AG04450 (cell line): ENCODE measurements at regions of chr20 and their contacts with region 1.

Region 1: GRCh38 chr20:11676630-11677284 is 240.9 kb upstream of the BTBD3 start:
- DNase-seq: peak; percentile 15
- H3K4me3 ChIP-seq: no peak overlapping the region
- H3K27ac ChIP-seq: no peak overlapping the region
- H3K27me3 ChIP-seq: peaks cover 3% of the 10 kb centered on the region
- CTCF ChIP-seq: peak; percentile 91

Region 2: GRCh38 chr20:11549172-11550103 is 127.3 kb before region 1 on chr20:
- CTCF ChIA-PET with region 1: no interaction called
- POLR2A ChIA-PET with region 1: no interaction called
- DNase-seq: no peak
- H3K4me3 ChIP-seq: no peak overlapping the region
- H3K27ac ChIP-seq: no peak overlapping the region
- H3K27me3 ChIP-seq: no peaks in the 10 kb centered on the region
- CTCF ChIP-seq: no peak

Region 3: GRCh38 chr20:12166053-12166717 is 489.4 kb after region 1 on chr20:
- CTCF ChIA-PET with region 1: interaction called, 11 read pairs
- POLR2A ChIA-PET with region 1: no interaction called
- DNase-seq: peak; percentile 78
- H3K4me3 ChIP-seq: no peak overlapping the region
- H3K27ac ChIP-seq: peak overlapping the region; percentile 71
- H3K27me3 ChIP-seq: no peaks in the 10 kb centered on the region
- CTCF ChIP-seq: no peak

Region 4: GRCh38 chr20:12207875-12208274 is 531.1 kb after region 1 on chr20:
- CTCF ChIA-PET with region 1: interaction called, 12 read pairs
- POLR2A ChIA-PET with region 1: no interaction called
- DNase-seq: peak; percentile 13
- H3K4me3 ChIP-seq: no peak overlapping the region
- H3K27ac ChIP-seq: no peak overlapping the region
- H3K27me3 ChIP-seq: peaks cover 3% of the 10 kb centered on the region
- CTCF ChIP-seq: peak; percentile 83